ENCODE measurements at regions of chr19 and their contacts with region 1.

Region 1: GRCh38 chr19:732148-733069 is 18.5 kb upstream of the MISP start:
- DNase-seq: no peak
- H3K4me3 ChIP-seq: no peak overlapping the region
- H3K27ac ChIP-seq: no peak overlapping the region
- H3K4me1 ChIP-seq: no peaks in the 10 kb centered on the region
- H3K27me3 ChIP-seq: no peaks in the 10 kb centered on the region
- CTCF ChIP-seq: no peak
- EP300 ChIP-seq: no peak
- RAD21 ChIP-seq: no peak

Region 2: GRCh38 chr19:662962-663681 is 69.3 kb before region 1 on chr19 and contains the start of gene RNF126:
- CTCF ChIA-PET with region 1: interaction called, 26 read pairs
- POLR2A ChIA-PET with region 1: no interaction called
- DNase-seq: peak; percentile 97
- H3K4me3 ChIP-seq: peak within 1 kb of the TSS; percentile 86 to 96
- H3K27ac ChIP-seq: peak within 1 kb of the TSS; percentile 72 to 93
- H3K4me1 ChIP-seq: peaks cover 7 to 32% of the 10 kb centered on the region in 2 experiments; a peak in 2 of 4 replicates
- H3K27me3 ChIP-seq: no peaks in the 10 kb centered on the region
- CTCF ChIP-seq: no peak
- EP300 ChIP-seq: no peak
- RAD21 ChIP-seq: no peak
- polyA plus RNA-seq, gene RNF126: 9.0 and 12.9 TPM in 2 replicates

Region 3: DNA sequence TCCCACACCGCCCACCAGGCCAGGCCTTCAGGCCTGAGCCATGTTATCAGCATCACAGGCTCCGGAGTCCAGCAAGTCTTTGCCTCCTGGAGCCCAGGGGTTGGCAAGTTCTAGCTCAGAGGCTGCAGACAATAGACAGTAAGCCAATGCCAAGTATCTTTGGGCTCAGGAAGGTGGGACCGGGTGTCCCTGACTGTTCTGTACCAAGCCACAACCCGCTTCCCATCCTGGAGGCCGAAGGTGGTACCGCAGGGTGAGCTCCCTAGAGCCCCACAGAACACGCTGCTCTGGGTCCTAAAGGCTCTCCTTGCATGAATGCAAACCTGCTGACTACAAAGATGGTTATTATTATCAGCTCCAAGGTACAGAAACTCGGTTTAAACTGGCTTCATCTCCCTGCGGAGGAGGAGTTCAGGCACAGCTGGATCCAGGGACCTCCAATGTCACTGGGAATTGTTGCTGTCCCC is 61.8 kb before region 1 on chr19:
- CTCF ChIA-PET with region 1: interaction called, 33 read pairs
- POLR2A ChIA-PET with region 1: no interaction called
- DNase-seq: no peak
- H3K4me3 ChIP-seq: no peak overlapping the region
- H3K27ac ChIP-seq: no peak overlapping the region
- H3K4me1 ChIP-seq: peaks cover 0 to 6% of the 10 kb centered on the region in 2 experiments; a peak in 1 of 4 replicates
- H3K27me3 ChIP-seq: no peaks in the 10 kb centered on the region
- CTCF ChIP-seq: no peak; the same call in 1 of the 2 replicates
- EP300 ChIP-seq: no peak
- RAD21 ChIP-seq: no peak

Region 4: GRCh38 chr19:680287-681028 is 52.0 kb before region 1 on chr19:
- CTCF ChIA-PET with region 1: interaction called, 33 read pairs
- POLR2A ChIA-PET with region 1: no interaction called
- DNase-seq: peak; percentile 98
- H3K4me3 ChIP-seq: peak overlapping the region; percentile 82 to 95
- H3K27ac ChIP-seq: peak overlapping the region; percentile 93 to 96
- H3K4me1 ChIP-seq: peaks cover 8 to 29% of the 10 kb centered on the region in 2 experiments; a peak in 3 of 4 replicates
- H3K27me3 ChIP-seq: no peaks in the 10 kb centered on the region
- CTCF ChIP-seq: peak; percentile 41
- EP300 ChIP-seq: no peak
- RAD21 ChIP-seq: peak; percentile 14; the same call in 1 of the 2 replicates

Region 5: GRCh38 chr19:703651-704446 is 28.6 kb before region 1 on chr19:
- CTCF ChIA-PET with region 1: interaction called, 12 read pairs
- POLR2A ChIA-PET with region 1: no interaction called
- DNase-seq: peak; percentile 97
- H3K4me3 ChIP-seq: peak overlapping the region in 1 of 2 experiments; percentile 13; a peak in 2 of 4 replicates
- H3K27ac ChIP-seq: no peak overlapping the region
- H3K4me1 ChIP-seq: peaks cover 0 to 9% of the 10 kb centered on the region in 2 experiments; a peak in 1 of 4 replicates
- H3K27me3 ChIP-seq: no peaks in the 10 kb centered on the region
- CTCF ChIP-seq: no peak
- EP300 ChIP-seq: no peak
- RAD21 ChIP-seq: no peak

Region 6: GRCh38 chr19:709965-710571 is 22.3 kb before region 1 on chr19:
- CTCF ChIA-PET with region 1: interaction called, 21 read pairs
- POLR2A ChIA-PET with region 1: no interaction called
- DNase-seq: peak; percentile 55
- H3K4me3 ChIP-seq: peak overlapping the region; percentile 68 to 73; a peak in 3 of 4 replicates
- H3K27ac ChIP-seq: peak overlapping the region in 1 of 2 experiments; percentile 66; a peak in 1 of 4 replicates
- H3K4me1 ChIP-seq: peaks cover 0 to 23% of the 10 kb centered on the region in 2 experiments; a peak in 1 of 4 replicates
- H3K27me3 ChIP-seq: no peaks in the 10 kb centered on the region
- CTCF ChIP-seq: no peak
- EP300 ChIP-seq: no peak
- RAD21 ChIP-seq: no peak

Region 7: GRCh38 chr19:720345-721160 is 11.9 kb before region 1 on chr19:
- CTCF ChIA-PET with region 1: interaction called, 35 read pairs
- POLR2A ChIA-PET with region 1: no interaction called
- DNase-seq: peak; percentile 90
- H3K4me3 ChIP-seq: peak overlapping the region in 1 of 2 experiments; percentile 27; a peak in 1 of 4 replicates
- H3K27ac ChIP-seq: peak overlapping the region in 1 of 2 experiments; percentile 72; a peak in 2 of 4 replicates
- H3K4me1 ChIP-seq: no peaks in the 10 kb centered on the region; a peak in 1 of 4 replicates
- H3K27me3 ChIP-seq: no peaks in the 10 kb centered on the region
- CTCF ChIP-seq: no peak
- EP300 ChIP-seq: no peak
- RAD21 ChIP-seq: no peak

Measured in SK-N-SH (cell line).